Panc1 (cell line): ENCODE measurements at regions of chr1 and their contacts with region 1.

Region 1: DNA sequence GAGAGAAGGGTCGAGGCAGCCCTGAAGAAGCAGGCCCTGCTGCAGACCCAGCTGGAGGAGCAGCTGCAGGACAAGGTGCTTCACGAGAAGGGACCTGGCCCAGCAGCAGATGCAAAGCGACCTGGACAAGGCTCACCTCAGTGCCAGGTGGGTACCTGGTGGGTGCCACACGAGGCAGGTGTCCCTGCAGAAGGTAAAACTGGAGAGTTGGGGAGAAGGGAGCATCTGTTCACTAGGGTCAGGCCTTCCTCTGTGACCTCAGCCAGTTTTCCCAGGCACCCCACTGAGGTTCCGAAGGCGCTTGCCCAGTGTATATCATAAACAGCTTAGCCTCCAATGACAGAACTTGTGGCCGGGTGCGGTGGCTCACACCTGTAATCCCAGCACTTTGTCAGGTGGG is 5.5 kb upstream of the NBPF3 start:
- DNase-seq: no peak
- ATAC-seq: no peak
- H3K4me3 ChIP-seq: no peak overlapping the region
- H3K27ac ChIP-seq: no peak overlapping the region
- H3K4me1 ChIP-seq: peaks cover 1% of the 10 kb centered on the region
- H3K27me3 ChIP-seq: no peaks in the 10 kb centered on the region
- CTCF ChIP-seq: no peak

Region 2: DNA sequence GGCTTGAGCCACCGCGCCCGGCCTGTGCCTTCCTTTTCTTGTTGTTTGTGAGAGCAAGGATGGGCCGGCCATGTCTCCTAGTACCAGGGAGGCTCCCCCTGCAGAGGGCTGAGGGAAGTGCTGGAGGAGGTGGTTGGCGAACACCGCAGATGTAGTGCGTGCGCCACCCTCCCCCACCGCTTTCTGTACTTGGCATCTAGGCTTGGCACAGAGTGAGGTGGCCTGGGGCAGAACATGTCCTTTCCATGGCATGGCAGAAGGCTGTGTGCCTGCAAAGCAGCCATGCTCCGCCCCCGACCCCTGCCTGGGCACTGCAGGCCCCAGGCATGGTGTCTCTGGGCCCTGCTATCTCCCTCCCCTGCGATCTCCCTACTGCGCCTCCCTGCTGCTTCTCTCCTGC is 105.5 kb after region 1 on chr1:
- CTCF ChIA-PET with region 1: no interaction called
- POLR2A ChIA-PET with region 1: interaction called, 13 read pairs
- in situ Hi-C with region 1: no loop called
- intact Hi-C with region 1: no loop called
- DNase-seq: no peak
- ATAC-seq: peak; percentile 68; the same call in 1 of the 2 replicates
- H3K4me3 ChIP-seq: no peak overlapping the region
- H3K27ac ChIP-seq: no peak overlapping the region
- H3K4me1 ChIP-seq: no peaks in the 10 kb centered on the region
- H3K27me3 ChIP-seq: no peaks in the 10 kb centered on the region
- CTCF ChIP-seq: no peak; the same call in 1 of the 2 replicates

Region 3: DNA sequence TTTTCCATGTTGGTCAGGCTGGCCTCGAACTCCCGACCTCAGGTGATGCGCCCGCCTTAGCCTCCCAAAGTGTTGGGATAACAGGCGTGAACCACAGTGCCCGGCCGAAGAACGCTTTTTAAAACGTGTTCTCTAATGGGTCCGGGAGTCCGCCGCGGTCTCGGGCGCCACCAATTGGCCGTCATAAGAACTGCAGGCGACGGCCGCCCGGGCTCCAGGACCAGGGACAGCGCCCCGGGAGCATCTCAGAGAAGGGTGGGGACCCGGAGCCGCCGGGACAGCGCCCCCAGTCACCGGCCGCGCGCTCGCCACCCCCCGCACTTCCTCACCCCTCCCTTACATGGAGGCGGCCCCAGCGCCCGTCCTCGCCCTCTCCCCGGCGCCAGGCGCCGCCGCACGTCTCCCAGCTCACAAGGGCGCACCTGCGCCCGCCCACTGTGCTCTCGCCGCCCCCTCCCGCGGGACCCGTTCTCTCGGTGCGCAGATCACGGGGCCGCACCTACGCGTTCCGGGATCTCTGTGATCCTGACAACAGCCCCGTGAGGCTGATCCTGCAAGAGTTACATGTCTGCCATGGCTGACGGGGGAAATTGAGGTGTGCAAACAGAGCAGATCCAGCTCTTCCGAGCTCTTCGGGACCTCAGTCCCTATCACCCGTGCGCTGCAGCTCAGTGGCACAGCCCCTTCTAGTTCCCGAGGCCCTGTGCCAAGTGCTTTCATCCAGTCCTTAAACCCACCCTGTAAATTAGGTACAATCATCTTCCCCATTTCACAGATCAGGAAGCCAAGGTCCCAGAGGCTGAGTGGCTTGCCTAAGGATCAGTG is 224.9 kb after region 1 on chr1:
- CTCF ChIA-PET with region 1: no interaction called
- POLR2A ChIA-PET with region 1: no interaction called
- in situ Hi-C with region 1: no loop called
- intact Hi-C with region 1: no loop called
- DNase-seq: no peak
- ATAC-seq: peak; percentile 45
- H3K4me3 ChIP-seq: peak overlapping the region; percentile 18 to 31; a peak in 2 of 4 replicates
- H3K27ac ChIP-seq: no peak overlapping the region
- H3K4me1 ChIP-seq: 0 out of 2 replicates have a peak, but pooled peaks cover 4% of the 10 kb centered on the region
- H3K27me3 ChIP-seq: peaks cover 2% of the 10 kb centered on the region; the same call in 1 of the 2 replicates
- CTCF ChIP-seq: peak; percentile 99

Region 4: DNA sequence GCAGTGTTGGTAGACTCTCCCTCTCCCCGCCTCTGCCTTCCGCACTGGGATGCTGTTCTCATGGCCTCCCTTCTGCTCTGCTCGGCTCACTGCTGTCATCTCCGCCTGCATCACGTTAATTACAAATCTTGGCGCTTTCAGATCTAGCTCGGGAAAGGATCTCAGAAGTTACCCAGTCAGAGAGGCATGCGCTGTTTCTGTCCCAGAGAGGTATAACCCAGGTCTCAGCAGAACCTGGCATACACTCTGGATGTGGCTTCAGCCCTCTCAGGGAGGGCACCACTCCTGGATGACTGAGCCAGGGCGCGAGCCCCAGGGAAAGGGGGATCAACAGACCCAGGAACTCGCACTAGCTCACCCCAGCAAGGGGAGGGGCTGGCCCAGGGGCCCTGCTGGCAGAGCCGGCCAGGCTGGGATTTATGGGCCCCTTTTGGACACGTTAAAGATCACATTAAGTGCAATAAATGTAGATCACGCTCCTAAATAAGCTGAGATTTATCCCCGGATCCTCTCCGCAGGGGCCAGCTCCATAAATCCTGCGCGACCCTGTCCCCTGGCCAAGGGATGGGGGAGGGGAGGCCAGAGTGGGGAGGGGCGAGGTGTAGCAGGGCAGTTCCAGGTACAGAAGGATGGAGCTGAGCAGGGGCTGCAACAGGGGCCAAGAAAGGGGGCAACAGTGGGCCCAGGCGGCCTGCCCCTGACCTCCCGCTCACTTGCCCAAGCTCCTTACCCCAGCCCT is 915.9 kb after region 1 on chr1:
- CTCF ChIA-PET with region 1: no interaction called
- POLR2A ChIA-PET with region 1: no interaction called
- in situ Hi-C with region 1: no loop called
- intact Hi-C with region 1: no loop called
- DNase-seq: no peak
- ATAC-seq: no peak
- H3K4me3 ChIP-seq: no peak overlapping the region
- H3K27ac ChIP-seq: no peak overlapping the region
- H3K4me1 ChIP-seq: peaks cover 8% of the 10 kb centered on the region
- H3K27me3 ChIP-seq: no peaks in the 10 kb centered on the region; the same call in 1 of the 2 replicates
- CTCF ChIP-seq: no peak